Activated naive CD4-positive, alpha-beta T cell treated with anti-CD3 and anti-CD28 coated beads, Interleukin-2, amount 10 ng/mL, durations not matched to agents 7 days and 5 days (primary cell): ENCODE measurements at regions of chr19 and their contacts with region 1.

Region 1: GRCh38 chr19:48110350-48110966 is at the start of gene PLA2G4C:
- DNase-seq: peak; percentile 86
- H3K4me3 Mint-ChIP-seq: peak within 1 kb of the TSS; percentile 73
- H3K27ac Mint-ChIP-seq: peak within 1 kb of the TSS; percentile 88
- H3K4me1 Mint-ChIP-seq: peaks cover 15% of the 10 kb centered on the region
- H3K27me3 Mint-ChIP-seq: no peaks in the 10 kb centered on the region

Region 2: GRCh38 chr19:46571531-46571930 is 1538.9 kb before region 1 on chr19:
- CTCF ChIA-PET with region 1: no interaction called
- DNase-seq: peak; percentile 56
- H3K4me3 Mint-ChIP-seq: no peak overlapping the region
- H3K27ac Mint-ChIP-seq: no peak overlapping the region
- H3K4me1 Mint-ChIP-seq: peaks cover 24% of the 10 kb centered on the region
- H3K27me3 Mint-ChIP-seq: peaks cover 27% of the 10 kb centered on the region

Region 3: DNA sequence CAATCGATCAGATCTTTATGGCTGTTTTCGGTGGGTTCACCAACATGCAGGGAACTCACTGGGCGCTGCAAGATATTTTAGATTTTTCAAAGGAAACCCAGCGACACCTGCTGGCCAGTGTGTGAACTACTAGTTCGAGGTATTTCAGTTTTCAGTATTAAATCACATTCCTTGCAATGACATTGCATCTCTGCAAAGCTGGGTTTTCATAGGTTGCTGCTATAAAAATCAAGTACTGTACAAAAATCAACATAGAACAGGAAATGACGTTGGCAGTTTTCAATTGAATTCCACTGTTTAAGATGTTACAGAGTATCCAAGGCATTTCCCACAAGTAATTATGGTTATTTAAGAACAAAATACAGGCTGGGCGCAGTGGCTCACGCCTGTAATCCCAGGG is 42.1 kb after region 1 on chr19:
- CTCF ChIA-PET with region 1: interaction called, 15 read pairs
- DNase-seq: peak; percentile 79
- H3K4me3 Mint-ChIP-seq: no peak overlapping the region
- H3K27ac Mint-ChIP-seq: peak overlapping the region; percentile 73
- H3K4me1 Mint-ChIP-seq: peaks cover 2% of the 10 kb centered on the region
- H3K27me3 Mint-ChIP-seq: no peaks in the 10 kb centered on the region